Activated T-helper 1 cell treated with anti-CD3 and anti-CD28 coated beads, Interleukin-12 subunit alpha, Interleukin-12 subunit beta, Interleukin-2, Interleukin-4 antibody, amounts not matched to agents 30 ng/mL and 10 ng/mL and 1 ng/mL, durations not matched to agents 14 hours and 24 hours and 36 hours (primary cell): ENCODE measurements at regions of chr3 and their contacts with region 1.

Region 1: GRCh38 chr3:121834696-121835464 is at the starts of genes EAF2 and IQCB1:
- DNase-seq: peak; percentile 95
- H3K4me3 Mint-ChIP-seq: peak within 1 kb of the TSS; percentile 98
- H3K27ac Mint-ChIP-seq: peak within 1 kb of the TSS; percentile 97
- H3K4me1 Mint-ChIP-seq: peaks cover 60% of the 10 kb centered on the region
- H3K27me3 Mint-ChIP-seq: no peaks in the 10 kb centered on the region
- total RNA-seq, gene EAF2: 15.3 and 18.8 TPM in 2 replicates
- total RNA-seq, gene IQCB1: 45.2 and 50.4 TPM in 2 replicates

Region 2: DNA sequence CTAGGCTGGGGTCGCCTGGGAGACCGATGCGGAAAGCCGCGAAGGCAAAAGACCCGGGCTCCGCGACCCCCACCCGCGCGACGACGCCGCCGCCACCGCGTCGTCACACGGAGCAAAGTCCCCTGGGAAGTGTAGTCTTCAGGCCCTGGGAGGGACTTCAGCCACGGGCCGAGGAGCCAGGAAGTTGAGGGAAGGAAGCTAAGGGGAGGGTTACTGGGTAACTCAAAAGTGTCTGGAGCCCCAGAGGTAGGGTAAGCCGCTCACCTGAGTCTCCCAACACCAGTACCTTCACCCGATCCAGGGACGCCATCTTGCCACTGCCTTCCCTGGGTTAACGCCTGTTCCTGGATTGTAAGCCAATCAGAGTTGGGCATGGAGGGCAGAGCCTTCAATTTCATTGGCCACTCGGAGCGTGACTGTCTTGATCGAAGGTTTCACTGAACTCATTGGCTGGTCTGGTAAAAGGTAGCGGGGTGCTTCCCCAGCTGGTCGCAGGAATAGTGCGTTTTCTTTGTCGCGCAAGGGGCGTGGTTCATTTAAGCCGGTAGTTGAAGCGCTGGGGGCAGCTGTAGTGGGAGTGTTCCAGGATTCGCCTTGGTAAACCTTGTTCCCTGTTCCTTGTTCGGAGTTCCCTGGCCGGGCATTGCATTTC is 1092.6 kb before region 1 on chr3 and contains the starts of genes GTF2E1 and RABL3:
- intact Hi-C with region 1: loop called (anchors 10 kb)
- DNase-seq: peak; percentile 95
- H3K4me3 Mint-ChIP-seq: peak within 1 kb of the TSS; percentile 84
- H3K27ac Mint-ChIP-seq: peak within 1 kb of the TSS; percentile 89
- H3K4me1 Mint-ChIP-seq: peaks cover 22% of the 10 kb centered on the region
- H3K27me3 Mint-ChIP-seq: no peaks in the 10 kb centered on the region
- total RNA-seq, gene GTF2E1: 25.3 and 29.2 TPM in 2 replicates
- total RNA-seq, gene RABL3: 24.3 and 25.6 TPM in 2 replicates

Region 3: DNA sequence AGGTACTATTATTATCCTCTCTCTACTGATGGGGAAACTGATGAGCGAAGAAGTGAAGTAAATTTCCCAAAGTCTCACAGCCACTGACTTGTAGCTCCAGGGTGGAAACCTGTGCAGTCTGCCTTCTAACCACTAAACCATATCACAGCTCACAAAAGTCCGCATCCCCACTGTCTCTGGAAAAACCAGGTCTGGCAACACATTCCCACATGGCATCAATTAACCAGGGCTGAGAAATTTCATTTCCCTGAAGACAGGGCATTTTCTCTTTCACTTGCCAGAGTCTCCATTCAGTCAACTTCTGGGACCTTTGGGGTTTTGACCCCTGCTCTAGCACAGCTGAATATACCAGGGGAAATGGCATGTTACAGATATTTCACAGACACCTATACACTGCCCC is 215.2 kb before region 1 on chr3:
- intact Hi-C with region 1: no loop called
- DNase-seq: no peak
- H3K4me3 Mint-ChIP-seq: no peak overlapping the region
- H3K27ac Mint-ChIP-seq: no peak overlapping the region
- H3K4me1 Mint-ChIP-seq: no peaks in the 10 kb centered on the region
- H3K27me3 Mint-ChIP-seq: peaks cover 3% of the 10 kb centered on the region

Region 4: DNA sequence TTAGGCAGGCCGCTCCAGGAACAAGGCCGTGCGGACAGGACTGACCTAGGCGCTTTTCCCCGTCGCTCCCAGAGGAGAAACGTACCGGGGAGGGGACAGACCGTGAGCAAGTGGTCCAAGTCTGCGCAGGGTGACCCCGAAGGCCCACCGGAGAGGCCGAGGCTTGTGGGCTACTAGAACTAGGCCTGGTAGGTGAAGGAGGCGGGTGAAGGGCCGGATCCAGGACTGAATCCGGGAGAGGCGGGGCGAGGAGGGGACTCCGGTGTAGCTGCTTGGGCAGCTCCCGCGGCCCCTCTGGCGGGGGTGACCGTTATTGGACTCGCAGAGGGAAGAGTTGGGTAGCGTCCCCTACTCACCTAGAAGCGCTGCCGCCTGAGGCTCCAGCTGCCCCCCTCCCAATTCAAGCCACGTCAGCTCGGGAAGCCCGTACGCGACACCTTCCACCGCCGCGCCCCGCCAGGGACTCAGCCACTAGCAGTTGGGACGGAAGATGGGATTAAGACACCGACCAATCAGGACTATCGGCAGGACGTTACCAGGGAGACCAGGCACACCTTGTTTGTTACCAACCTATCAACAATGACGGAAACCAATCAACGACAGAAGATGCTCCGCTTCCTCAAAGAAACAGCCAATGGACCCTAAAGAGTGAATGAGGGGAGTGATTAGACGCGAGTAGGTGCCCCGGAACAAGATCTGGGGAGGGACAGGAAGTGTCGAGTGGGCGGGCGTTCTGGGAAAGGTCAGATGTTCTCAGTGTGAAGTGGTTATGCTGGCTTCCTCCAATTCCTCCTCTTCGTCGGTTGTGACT is 85.4 kb before region 1 on chr3 and contains the start of gene GOLGB1:
- intact Hi-C with region 1: loop called (anchors 1 kb)
- DNase-seq: peak; percentile 89
- H3K4me3 Mint-ChIP-seq: no peak within 1 kb of the TSS
- H3K27ac Mint-ChIP-seq: no peak within 1 kb of the TSS
- H3K4me1 Mint-ChIP-seq: peaks cover 5% of the 10 kb centered on the region
- H3K27me3 Mint-ChIP-seq: peaks cover 12% of the 10 kb centered on the region
- total RNA-seq, gene GOLGB1: 23.2 and 23.6 TPM in 2 replicates

Region 5: DNA sequence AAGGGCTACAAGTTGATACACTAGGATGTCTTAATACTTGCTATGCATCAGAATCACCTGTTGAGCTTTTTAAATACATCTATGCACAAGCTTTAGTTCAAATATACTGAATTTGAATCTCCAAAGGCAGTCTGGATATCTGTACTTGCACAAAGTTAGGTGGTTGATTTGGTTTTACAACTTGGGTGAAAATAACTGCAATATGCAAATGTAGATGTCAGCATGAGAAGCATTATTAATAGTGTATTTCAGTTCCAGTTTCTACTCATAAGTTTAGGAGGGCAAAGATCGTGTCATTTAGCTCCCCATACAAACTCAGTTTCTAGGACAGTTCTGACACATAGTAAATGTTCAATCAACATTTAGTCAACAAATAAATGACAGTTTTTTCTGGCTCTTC is 25.6 kb before region 1 on chr3:
- intact Hi-C with region 1: no loop called
- DNase-seq: no peak
- H3K4me3 Mint-ChIP-seq: no peak overlapping the region
- H3K27ac Mint-ChIP-seq: no peak overlapping the region
- H3K4me1 Mint-ChIP-seq: peaks cover 16% of the 10 kb centered on the region
- H3K27me3 Mint-ChIP-seq: no peaks in the 10 kb centered on the region

Region 6: DNA sequence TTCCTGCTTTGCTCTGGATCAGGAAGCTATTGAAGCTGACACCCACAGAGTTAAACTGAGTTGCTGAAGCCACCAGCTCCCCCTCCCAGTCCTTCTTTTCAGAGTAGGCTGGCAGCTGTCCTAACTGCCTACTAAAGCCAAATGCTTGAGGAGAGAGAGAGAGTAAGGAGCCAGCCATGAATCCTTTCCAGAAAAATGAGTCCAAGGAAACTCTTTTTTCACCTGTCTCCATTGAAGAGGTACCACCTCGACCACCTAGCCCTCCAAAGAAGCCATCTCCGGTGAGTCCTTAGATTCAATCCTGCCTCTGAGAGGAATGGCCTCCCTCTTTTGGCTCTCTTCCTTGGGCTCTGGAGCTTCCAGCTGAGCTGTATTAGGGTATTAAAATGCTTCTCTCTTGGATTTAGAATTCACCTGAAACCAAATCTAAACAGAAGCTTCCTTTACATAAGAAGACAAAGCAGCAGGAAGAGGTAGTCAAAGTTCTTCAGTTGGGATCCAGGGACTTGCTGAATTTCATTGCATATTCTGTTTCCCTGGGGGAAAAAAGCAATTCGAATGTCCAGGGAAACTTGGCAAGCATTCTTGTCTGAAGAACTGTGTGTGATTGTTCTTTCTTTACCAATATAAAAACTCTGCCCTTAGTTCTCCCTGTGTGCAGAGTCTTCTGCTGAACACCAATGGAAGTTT is 59.6 kb after region 1 on chr3 and contains the start of gene SLC15A2:
- intact Hi-C with region 1: no loop called
- DNase-seq: no peak
- H3K4me3 Mint-ChIP-seq: no peak within 1 kb of the TSS
- H3K27ac Mint-ChIP-seq: no peak within 1 kb of the TSS
- H3K4me1 Mint-ChIP-seq: no peaks in the 10 kb centered on the region
- H3K27me3 Mint-ChIP-seq: peaks cover 2% of the 10 kb centered on the region
- total RNA-seq, gene SLC15A2: 3.2 and 3.3 TPM in 2 replicates

Region 7: GRCh38 chr3:122092460-122093165 is 257.7 kb after region 1 on chr3:
- intact Hi-C with region 1: loop called (anchors 2 kb)
- DNase-seq: peak; percentile 55
- H3K4me3 Mint-ChIP-seq: peak overlapping the region; percentile 32
- H3K27ac Mint-ChIP-seq: peak overlapping the region; percentile 90
- H3K4me1 Mint-ChIP-seq: peaks cover 40% of the 10 kb centered on the region
- H3K27me3 Mint-ChIP-seq: no peaks in the 10 kb centered on the region

Region 8: DNA sequence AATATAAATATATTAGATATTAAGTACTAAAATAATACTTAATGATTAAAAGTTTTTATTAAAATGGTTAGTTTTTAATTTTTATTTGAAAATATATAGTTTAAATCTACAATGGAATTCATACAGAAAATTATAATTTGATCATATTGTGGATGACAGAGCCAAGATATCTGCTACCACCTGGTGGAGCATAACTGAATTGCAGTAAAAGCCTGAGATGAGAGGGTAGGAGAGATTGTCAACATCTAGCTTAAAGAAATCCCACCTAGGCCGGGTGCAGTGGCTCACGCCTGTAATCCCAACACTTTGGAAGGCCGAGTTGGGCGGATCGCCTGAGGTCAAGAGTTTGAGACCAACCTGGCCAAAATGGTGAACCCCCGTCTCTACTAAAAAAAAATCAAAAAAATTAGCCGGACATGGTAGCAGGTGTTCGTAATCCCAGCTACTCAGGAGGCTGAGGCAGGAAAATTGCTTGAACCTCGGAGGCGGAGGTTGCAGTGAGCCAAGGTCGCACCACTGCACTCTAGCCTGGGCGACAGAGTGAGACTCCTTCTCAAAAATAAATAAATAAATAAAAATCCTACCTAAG is 465.1 kb after region 1 on chr3:
- intact Hi-C with region 1: loop called (anchors 5 kb)
- DNase-seq: no peak
- H3K4me3 Mint-ChIP-seq: no peak overlapping the region
- H3K27ac Mint-ChIP-seq: no peak overlapping the region
- H3K4me1 Mint-ChIP-seq: peaks cover 28% of the 10 kb centered on the region
- H3K27me3 Mint-ChIP-seq: no peaks in the 10 kb centered on the region

Region 9: GRCh38 chr3:122609798-122610559 is 775.1 kb after region 1 on chr3:
- intact Hi-C with region 1: loop called (anchors 1 kb)
- DNase-seq: peak; percentile 31
- H3K4me3 Mint-ChIP-seq: peak overlapping the region; percentile 58
- H3K27ac Mint-ChIP-seq: peak overlapping the region; percentile 89
- H3K4me1 Mint-ChIP-seq: peaks cover 20% of the 10 kb centered on the region
- H3K27me3 Mint-ChIP-seq: no peaks in the 10 kb centered on the region